ENCODE measurements at regions of chr15 and their contacts with region 1.

Region 1: DNA sequence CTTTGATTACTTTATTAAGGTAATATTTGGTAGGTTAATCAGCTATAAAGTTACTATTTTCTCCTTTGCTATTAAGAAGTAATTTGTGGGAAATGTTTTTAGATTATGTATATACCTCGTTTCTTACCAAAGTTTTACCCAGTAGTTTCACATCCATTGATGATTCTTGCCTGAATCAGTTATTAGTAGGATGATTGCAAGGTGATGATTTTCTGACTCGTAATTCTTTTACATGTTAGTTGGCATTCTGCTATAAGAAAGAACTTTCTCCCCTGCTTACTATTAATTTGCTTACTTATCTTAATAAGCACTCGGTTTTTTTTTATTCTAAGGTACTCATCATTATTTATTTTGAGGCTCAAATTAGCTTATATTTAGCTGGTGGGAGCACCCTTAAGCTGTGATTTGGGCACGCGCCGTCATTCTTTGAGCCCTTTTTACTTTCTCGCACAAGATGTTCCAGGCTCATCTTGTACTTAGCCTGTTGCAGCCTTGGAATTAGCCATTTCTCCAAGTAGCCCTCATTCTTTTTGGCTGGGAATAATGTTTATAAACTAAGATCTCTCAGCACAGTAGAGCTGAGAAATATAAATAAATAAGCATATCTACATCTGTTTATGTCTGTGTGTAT is 15.3 kb downstream of the USP3 start:
- DNase-seq: peak in 2 of 5 donors; percentile 32 to 69
- H3K4me3 ChIP-seq: no peak overlapping the region
- H3K27ac ChIP-seq: no peak overlapping the region
- H3K4me1 ChIP-seq: peaks cover 28% of the 10 kb centered on the region
- H3K27me3 ChIP-seq: no peaks in the 10 kb centered on the region
- CTCF ChIP-seq: no peak
- EP300 ChIP-seq: no peak
- POLR2A ChIP-seq: no peak

Region 2: GRCh38 chr15:63291507-63291906 is 228.2 kb before region 1 on chr15:
- intact Hi-C with region 1: no loop called
- DNase-seq: no peak
- H3K4me3 ChIP-seq: no peak overlapping the region
- H3K27ac ChIP-seq: no peak overlapping the region
- H3K4me1 ChIP-seq: no peaks in the 10 kb centered on the region
- H3K27me3 ChIP-seq: no peaks in the 10 kb centered on the region
- CTCF ChIP-seq: no peak
- EP300 ChIP-seq: no peak
- POLR2A ChIP-seq: no peak

Region 3: GRCh38 chr15:63466378-63467192 is 53.1 kb before region 1 on chr15:
- intact Hi-C with region 1: no loop called
- DNase-seq: peak in 1 of 5 donors; percentile 24
- H3K4me3 ChIP-seq: no peak overlapping the region
- H3K27ac ChIP-seq: no peak overlapping the region
- H3K4me1 ChIP-seq: no peaks in the 10 kb centered on the region
- H3K27me3 ChIP-seq: no peaks in the 10 kb centered on the region
- CTCF ChIP-seq: peak; percentile 24 to 50 (median 49)
- EP300 ChIP-seq: no peak
- POLR2A ChIP-seq: no peak

Region 4: GRCh38 chr15:63504247-63504978 is 15.2 kb before region 1 on chr15 and contains the start of gene USP3:
- intact Hi-C with region 1: loop called in 1 of 4 experiments (anchors 1 kb)
- DNase-seq: peak; percentile 92 to 98 (median 94)
- H3K4me3 ChIP-seq: peak within 1 kb of the TSS; percentile 72
- H3K27ac ChIP-seq: peak within 1 kb of the TSS; percentile 91 to 97
- H3K4me1 ChIP-seq: peaks cover 14% of the 10 kb centered on the region
- H3K27me3 ChIP-seq: no peaks in the 10 kb centered on the region
- CTCF ChIP-seq: peak in 2 of 3 donors; percentile 46 to 64
- EP300 ChIP-seq: no peak
- POLR2A ChIP-seq: peak; percentile 77
- total RNA-seq, gene USP3: 41.5 to 76.0 (median 62.9) TPM

Region 5: DNA sequence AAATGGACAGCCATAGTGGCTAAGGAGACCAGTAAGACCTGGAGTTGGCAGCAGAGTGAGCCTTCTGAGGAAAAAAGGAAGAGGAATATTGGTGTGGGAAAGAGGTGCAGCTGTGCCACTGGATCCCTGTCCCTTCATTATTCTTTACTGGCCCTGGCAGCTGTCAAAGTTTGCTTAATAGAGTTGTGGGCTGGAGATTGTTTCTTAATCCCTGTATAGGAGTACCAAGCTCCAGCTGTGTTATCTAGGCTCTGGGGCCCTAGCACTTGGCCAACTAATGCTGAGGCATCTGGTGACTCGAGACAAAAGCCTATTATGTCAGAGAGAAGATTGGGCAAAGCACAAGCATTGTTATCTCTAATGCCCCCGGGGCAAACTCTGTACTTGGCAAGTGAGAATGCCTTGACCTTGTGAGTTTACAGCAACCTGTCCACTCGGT is 1002.1 kb after region 1 on chr15:
- intact Hi-C with region 1: no loop called
- DNase-seq: peak in 1 of 5 donors; percentile 38
- H3K4me3 ChIP-seq: no peak overlapping the region
- H3K27ac ChIP-seq: peak overlapping the region in 1 of 2 donors; percentile 61
- H3K4me1 ChIP-seq: peaks cover 14% of the 10 kb centered on the region
- H3K27me3 ChIP-seq: no peaks in the 10 kb centered on the region
- CTCF ChIP-seq: no peak
- EP300 ChIP-seq: no peak
- POLR2A ChIP-seq: no peak

Measured in ovary (tissue), 10 donors.